ENCODE measurements at regions of chr5 and their contacts with region 1.

Region 1: DNA sequence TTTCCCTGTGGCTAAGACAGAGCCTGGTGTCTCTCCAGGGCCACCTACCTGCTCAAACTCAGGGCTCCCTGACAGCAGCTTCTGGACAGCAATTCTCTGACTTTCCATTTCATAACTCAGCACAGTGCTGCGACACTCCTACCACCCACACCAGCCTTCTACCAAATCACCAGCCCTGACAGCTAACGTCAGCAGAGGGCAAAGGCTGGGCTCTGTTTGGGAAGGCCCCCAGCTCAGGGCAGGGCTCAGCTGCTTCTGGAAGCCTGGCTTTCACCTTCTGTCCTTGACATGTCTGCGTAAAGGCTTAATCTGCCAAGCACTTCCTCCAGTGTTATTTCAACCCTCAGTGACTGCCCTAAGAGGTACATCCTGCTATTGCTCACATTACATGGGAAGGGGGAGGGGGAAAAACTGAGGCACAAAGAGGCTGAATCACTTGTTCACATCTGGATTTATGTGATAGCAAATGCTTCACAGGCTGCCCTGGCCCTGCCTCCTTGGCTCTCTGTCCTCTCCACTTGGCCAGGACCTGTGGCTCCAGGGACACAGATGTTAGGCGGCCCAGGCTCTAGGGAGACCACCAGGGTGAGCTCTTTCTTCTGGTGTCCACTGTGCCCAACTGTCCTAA is 102.5 kb upstream of the PANK3 start:
- DNase-seq: no peak
- H3K4me3 ChIP-seq: no peak overlapping the region
- H3K27ac ChIP-seq: no peak overlapping the region
- H3K4me1 ChIP-seq: no peaks in the 10 kb centered on the region
- H3K27me3 ChIP-seq: no peaks in the 10 kb centered on the region
- CTCF ChIP-seq: no peak

Region 2: DNA sequence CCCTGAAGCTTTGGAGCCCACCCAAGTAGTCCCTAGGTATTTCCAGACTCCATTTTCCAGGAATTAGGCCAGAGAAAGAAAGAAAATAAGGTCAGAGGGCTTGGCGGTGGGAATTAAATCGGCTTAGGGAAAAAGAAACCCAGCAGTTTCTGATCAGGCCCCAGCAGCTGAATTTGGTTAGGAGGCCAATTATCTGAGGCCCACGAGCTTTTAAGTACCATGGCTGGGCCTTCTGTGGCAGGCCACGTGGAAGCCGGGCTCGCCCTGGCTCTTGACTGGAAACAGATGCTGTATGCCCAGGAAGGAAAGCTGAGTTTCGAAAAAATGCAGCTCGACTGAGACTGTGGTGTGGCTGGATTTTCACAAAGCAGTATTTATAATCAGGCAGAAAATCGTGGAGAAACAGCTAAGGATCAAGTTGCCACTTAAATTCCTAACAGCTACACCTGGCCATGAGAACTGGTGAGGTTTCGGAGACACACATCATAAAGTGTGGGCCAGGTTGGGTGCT is 27.4 kb before region 1 on chr5:
- intact Hi-C with region 1: no loop called
- DNase-seq: no peak
- H3K4me3 ChIP-seq: no peak overlapping the region
- H3K27ac ChIP-seq: no peak overlapping the region
- H3K4me1 ChIP-seq: peaks cover 15% of the 10 kb centered on the region
- H3K27me3 ChIP-seq: no peaks in the 10 kb centered on the region
- CTCF ChIP-seq: no peak

Region 3: GRCh38 chr5:169302491-169303118 is 620.9 kb after region 1 on chr5:
- intact Hi-C with region 1: loop called (anchors 10 kb)
- DNase-seq: peak; percentile 75
- H3K4me3 ChIP-seq: no peak overlapping the region
- H3K27ac ChIP-seq: no peak overlapping the region
- H3K4me1 ChIP-seq: no peaks in the 10 kb centered on the region
- H3K27me3 ChIP-seq: peaks cover 20% of the 10 kb centered on the region
- CTCF ChIP-seq: peak; percentile 88

Region 4: DNA sequence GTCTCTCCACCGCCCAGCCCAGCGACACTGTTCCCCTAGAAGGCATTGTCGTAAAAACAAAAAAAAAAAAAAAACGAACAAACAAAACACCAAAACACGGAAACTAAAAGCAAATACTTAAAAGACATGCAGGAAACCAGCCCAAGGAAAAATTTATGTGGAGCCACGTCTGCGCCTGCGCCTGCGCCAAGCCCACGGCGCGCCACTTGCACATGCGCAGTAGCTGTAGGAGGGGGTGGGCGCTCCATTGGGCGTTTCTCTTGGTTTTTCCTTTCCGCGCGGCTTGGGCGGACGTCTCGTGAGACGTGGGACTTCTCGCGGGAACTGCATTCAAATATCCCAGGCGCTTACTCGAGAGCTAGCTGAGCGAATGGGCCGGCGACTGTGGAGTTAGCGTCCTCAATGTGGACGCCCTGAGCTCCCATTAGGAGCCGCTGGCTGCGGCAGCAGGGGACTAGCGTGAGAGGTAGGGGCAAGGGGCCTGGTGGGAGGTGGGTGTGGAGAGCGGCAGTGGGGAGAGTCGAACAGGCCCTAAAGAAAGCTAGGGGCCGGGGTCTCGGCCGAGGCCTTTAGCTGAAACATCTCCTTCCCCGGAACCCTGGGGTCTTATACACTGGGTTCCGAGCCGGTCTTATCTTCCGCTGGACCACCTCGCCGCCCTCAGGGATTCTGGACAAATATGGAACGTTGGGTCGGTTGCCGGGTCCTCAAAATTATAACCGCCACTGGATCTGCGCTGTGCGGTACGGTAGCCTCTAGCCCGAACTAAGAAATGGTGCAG is 901.9 kb after region 1 on chr5 and contains the start of gene SPDL1:
- intact Hi-C with region 1: loop called (anchors 10 kb)
- DNase-seq: peak; percentile 97
- H3K4me3 ChIP-seq: peak within 1 kb of the TSS; percentile 86
- H3K27ac ChIP-seq: peak within 1 kb of the TSS; percentile 58
- H3K4me1 ChIP-seq: no peaks in the 10 kb centered on the region
- H3K27me3 ChIP-seq: no peaks in the 10 kb centered on the region
- CTCF ChIP-seq: no peak
- total RNA-seq, gene SPDL1: 8.0 to 13.7 TPM

Measured in colonic mucosa (tissue), 4 donors.